Activated CD8-positive, alpha-beta memory T cell treated with anti-CD3 and anti-CD28 coated beads, Interleukin-2, amount 10 ng/mL, durations not matched to agents 7 days and 5 days (primary cell): ENCODE measurements at regions of chr11 and their contacts with region 1.

Region 1: GRCh38 chr11:66126808-66127555 is 56.9 kb downstream of the PACS1 start:
- DNase-seq: peak; percentile 75
- ATAC-seq: peak; percentile 87
- H3K4me3 Mint-ChIP-seq: peak overlapping the region; percentile 40
- H3K27ac Mint-ChIP-seq: peak overlapping the region; percentile 83
- H3K4me1 Mint-ChIP-seq: peaks cover 65% of the 10 kb centered on the region
- H3K27me3 Mint-ChIP-seq: no peaks in the 10 kb centered on the region

Region 2: GRCh38 chr11:66045177-66045639 is 81.8 kb before region 1 on chr11:
- CTCF ChIA-PET with region 1: interaction called, 11 read pairs
- DNase-seq: peak; percentile 86
- ATAC-seq: peak; percentile 96
- H3K4me3 Mint-ChIP-seq: no peak overlapping the region
- H3K27ac Mint-ChIP-seq: no peak overlapping the region
- H3K4me1 Mint-ChIP-seq: peaks cover 17% of the 10 kb centered on the region
- H3K27me3 Mint-ChIP-seq: peaks cover 2% of the 10 kb centered on the region

Region 3: GRCh38 chr11:66081505-66081904 is 45.5 kb before region 1 on chr11:
- CTCF ChIA-PET with region 1: interaction called, 11 read pairs
- DNase-seq: peak; percentile 89
- ATAC-seq: peak; percentile 95
- H3K4me3 Mint-ChIP-seq: peak overlapping the region; percentile 69
- H3K27ac Mint-ChIP-seq: peak overlapping the region; percentile 97
- H3K4me1 Mint-ChIP-seq: peaks cover 57% of the 10 kb centered on the region
- H3K27me3 Mint-ChIP-seq: no peaks in the 10 kb centered on the region